HepG2 (cell line): ENCODE measurements at regions of chr5 and their contacts with region 1.

Region 1: DNA sequence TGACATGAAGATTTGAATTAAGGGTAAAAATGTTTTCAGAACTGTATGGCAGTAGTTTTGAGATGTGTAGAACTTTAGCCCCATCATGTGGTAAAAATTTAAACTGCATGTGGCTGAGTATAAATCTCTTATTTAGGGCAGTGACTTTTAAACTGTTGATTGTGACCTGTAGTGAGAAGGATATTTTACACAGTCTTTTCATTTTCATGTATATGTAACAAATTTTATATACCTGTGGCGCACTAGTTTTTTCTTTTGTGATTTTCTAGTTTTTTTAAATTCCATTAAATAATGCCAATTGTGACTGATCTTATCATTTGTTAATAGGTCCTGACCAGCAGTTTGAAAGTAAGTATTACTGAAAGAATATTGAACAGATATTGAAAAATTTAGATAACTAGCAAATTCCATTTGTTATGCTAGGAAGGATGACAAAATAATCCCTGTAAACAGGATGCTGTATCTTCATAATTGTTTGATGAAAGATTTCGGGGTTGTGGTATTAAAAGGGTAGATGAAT is 47.2 kb downstream of the GPBP1 start:
- DNase-seq: peak; percentile 59
- ATAC-seq: peak; percentile 66; the same call in 2 of the 3 replicates
- H3K4me3 ChIP-seq: no peak overlapping the region
- H3K27ac ChIP-seq: no peak overlapping the region
- H3K4me1 ChIP-seq: 0 out of 2 replicates have a peak, but pooled peaks cover 12% of the 10 kb centered on the region
- H3K27me3 ChIP-seq: no peaks in the 10 kb centered on the region
- CTCF ChIP-seq: peak; percentile 68
- EP300 ChIP-seq: no peak
- POLR2A ChIP-seq: no peak
- RAD21 ChIP-seq: peak; percentile 60; the same call in 1 of the 2 replicates

Region 2: GRCh38 chr5:56900858-56901578 is 320.1 kb before region 1 on chr5:
- CTCF ChIA-PET with region 1: interaction called, 13 read pairs
- POLR2A ChIA-PET with region 1: no interaction called
- in situ Hi-C with region 1: loop called (anchors 10 kb)
- intact Hi-C with region 1: loop called (anchors 2 kb)
- DNase-seq: peak; percentile 56
- ATAC-seq: peak; percentile 83
- H3K4me3 ChIP-seq: no peak overlapping the region
- H3K27ac ChIP-seq: no peak overlapping the region
- H3K4me1 ChIP-seq: no peaks in the 10 kb centered on the region; the same call in 1 of the 2 replicates
- H3K27me3 ChIP-seq: no peaks in the 10 kb centered on the region
- CTCF ChIP-seq: peak; percentile 79
- EP300 ChIP-seq: no peak
- POLR2A ChIP-seq: no peak
- RAD21 ChIP-seq: peak; percentile 77

Region 3: DNA sequence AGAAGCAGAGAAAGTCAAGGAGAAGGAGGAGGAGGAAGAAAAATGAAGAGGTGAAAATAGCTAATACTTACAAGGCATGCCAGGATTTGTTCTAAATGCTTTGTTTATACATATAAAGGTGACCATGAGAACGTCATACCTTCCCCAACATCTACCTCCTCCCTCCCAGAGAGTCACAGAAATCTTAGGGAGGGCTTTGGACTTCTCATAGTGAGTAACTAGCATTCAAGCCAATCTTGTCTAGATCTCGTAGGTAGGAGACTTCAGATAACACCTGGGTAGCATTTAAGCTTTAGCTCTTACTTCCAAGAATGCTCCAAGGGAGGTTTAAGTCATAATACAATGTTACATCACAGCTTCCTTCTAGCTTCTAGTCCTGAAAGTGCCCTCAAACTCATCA is 83.7 kb before region 1 on chr5:
- CTCF ChIA-PET with region 1: interaction called, 9 read pairs
- POLR2A ChIA-PET with region 1: no interaction called
- in situ Hi-C with region 1: no loop called
- intact Hi-C with region 1: loop called (anchors 1 kb)
- DNase-seq: no peak
- ATAC-seq: no peak
- H3K4me3 ChIP-seq: no peak overlapping the region
- H3K27ac ChIP-seq: no peak overlapping the region
- H3K4me1 ChIP-seq: peaks cover 30% of the 10 kb centered on the region
- H3K27me3 ChIP-seq: no peaks in the 10 kb centered on the region
- CTCF ChIP-seq: no peak
- EP300 ChIP-seq: no peak
- POLR2A ChIP-seq: no peak
- RAD21 ChIP-seq: no peak

Region 4: GRCh38 chr5:57173185-57174127 is 47.7 kb before region 1 on chr5 and contains the start of gene GPBP1:
- CTCF ChIA-PET with region 1: no interaction called
- POLR2A ChIA-PET with region 1: interaction called, 7 read pairs
- in situ Hi-C with region 1: no loop called
- intact Hi-C with region 1: loop called (anchors 2 kb)
- DNase-seq: peak; percentile 96
- ATAC-seq: peak; percentile 85
- H3K4me3 ChIP-seq: peak within 1 kb of the TSS; percentile 90 to 94 (median 94)
- H3K27ac ChIP-seq: peak within 1 kb of the TSS; percentile 97
- H3K4me1 ChIP-seq: peaks cover 9% of the 10 kb centered on the region
- H3K27me3 ChIP-seq: no peaks in the 10 kb centered on the region; a peak in 1 of 5 replicates
- CTCF ChIP-seq: peak; percentile 47
- EP300 ChIP-seq: 0 out of 4 replicates have a peak, but pooled peaks of 1 of the 2 experiments have one; percentile 37
- POLR2A ChIP-seq: peak; percentile 50 to 79
- RAD21 ChIP-seq: peak; percentile 45; the same call in 1 of the 2 replicates
- total RNA-seq, gene GPBP1: 72.2 and 101 TPM in 2 replicates

Region 5: DNA sequence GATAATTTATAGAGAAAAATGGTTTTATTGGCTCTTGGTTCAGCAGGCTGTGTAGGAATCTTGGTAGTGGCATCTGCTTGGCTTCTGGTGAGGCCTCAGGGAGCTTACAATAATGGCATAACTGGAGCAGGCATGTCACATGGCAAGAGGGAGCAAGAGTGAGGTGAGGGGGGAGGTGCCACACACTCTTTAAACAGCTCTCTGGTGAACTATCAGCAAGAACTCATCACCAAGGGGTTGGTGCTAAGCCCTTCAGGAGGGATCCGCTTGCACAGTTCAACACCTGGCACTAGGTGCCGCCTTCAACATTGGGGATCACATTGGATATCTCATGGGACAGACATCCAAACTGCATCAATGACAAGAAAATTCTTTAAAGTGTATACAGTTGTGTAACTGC is 36.8 kb before region 1 on chr5:
- CTCF ChIA-PET with region 1: no interaction called
- POLR2A ChIA-PET with region 1: no interaction called
- in situ Hi-C with region 1: no loop called
- intact Hi-C with region 1: loop called (anchors 2 kb)
- DNase-seq: no peak
- ATAC-seq: peak; percentile 81
- H3K4me3 ChIP-seq: no peak overlapping the region
- H3K27ac ChIP-seq: no peak overlapping the region
- H3K4me1 ChIP-seq: peaks cover 80% of the 10 kb centered on the region
- H3K27me3 ChIP-seq: no peaks in the 10 kb centered on the region
- CTCF ChIP-seq: peak; percentile 44; the same call in 1 of the 2 replicates
- EP300 ChIP-seq: no peak
- POLR2A ChIP-seq: no peak
- RAD21 ChIP-seq: no peak

Region 6: GRCh38 chr5:57199866-57200265 is 21.2 kb before region 1 on chr5:
- CTCF ChIA-PET with region 1: no interaction called
- POLR2A ChIA-PET with region 1: no interaction called
- in situ Hi-C with region 1: no loop called
- intact Hi-C with region 1: no loop called
- DNase-seq: no peak
- ATAC-seq: no peak
- H3K4me3 ChIP-seq: no peak overlapping the region
- H3K27ac ChIP-seq: no peak overlapping the region
- H3K4me1 ChIP-seq: 0 out of 2 replicates have a peak, but pooled peaks cover 21% of the 10 kb centered on the region
- H3K27me3 ChIP-seq: no peaks in the 10 kb centered on the region
- CTCF ChIP-seq: no peak
- EP300 ChIP-seq: no peak
- POLR2A ChIP-seq: no peak
- RAD21 ChIP-seq: no peak